A673 (cell line): ENCODE measurements at regions of chrX and their contacts with region 1.

Region 1: DNA sequence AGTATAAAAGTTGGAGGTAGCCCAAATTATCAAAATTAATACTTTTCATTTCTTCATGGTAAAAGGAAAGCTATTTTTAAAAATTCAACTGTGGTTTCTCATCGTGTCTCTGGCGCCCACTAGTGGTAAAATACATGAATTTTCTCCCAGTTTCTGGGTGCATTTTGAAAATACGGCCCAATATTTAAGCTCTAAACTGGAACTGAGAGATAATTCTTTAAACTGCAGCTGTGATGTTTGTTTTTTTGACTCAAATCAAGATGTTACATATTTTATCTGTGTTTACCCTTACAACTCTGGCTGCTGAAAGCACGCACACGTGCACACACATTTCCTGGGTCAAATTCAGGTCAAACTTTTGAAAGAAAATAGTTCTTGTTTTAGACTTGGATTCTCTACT is 123.9 kb upstream of the ACSL4 start:
- DNase-seq: peak; percentile 48
- H3K4me3 ChIP-seq: no peak overlapping the region
- H3K27ac ChIP-seq: no peak overlapping the region
- H3K4me1 ChIP-seq: no peaks in the 10 kb centered on the region
- H3K27me3 ChIP-seq: no peaks in the 10 kb centered on the region
- CTCF ChIP-seq: peak; percentile 89

Region 2: DNA sequence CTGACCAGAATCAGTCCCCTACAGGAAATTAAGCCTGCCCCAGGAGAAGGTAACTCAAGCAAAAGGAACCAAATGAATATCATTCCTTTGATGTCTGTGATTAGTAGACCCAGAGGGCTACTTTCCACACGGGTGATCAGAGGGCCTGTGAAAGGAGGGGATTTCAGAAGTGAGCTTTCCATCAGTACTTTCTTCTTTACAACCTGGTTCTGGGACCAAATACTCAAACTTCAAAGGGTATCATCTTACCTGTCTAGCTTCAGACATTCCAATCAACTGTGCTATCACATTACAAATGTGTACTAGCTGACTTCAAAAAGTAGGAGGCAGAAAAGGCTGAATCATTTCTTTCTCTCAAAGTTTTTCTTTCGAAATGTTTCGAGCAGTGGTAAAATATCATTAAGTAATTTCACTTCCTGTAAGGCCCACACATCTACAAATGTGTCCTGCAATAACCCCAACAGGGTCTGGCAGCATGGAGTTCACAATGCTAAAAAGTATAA is 147.8 kb before region 1 on chrX:
- CTCF ChIA-PET with region 1: interaction called, 20 read pairs
- POLR2A ChIA-PET with region 1: no interaction called
- intact Hi-C with region 1: loop called (anchors 1 kb)
- DNase-seq: peak; percentile 45
- H3K4me3 ChIP-seq: peak overlapping the region; percentile 0
- H3K27ac ChIP-seq: peak overlapping the region; percentile 58
- H3K4me1 ChIP-seq: peaks cover 10% of the 10 kb centered on the region
- H3K27me3 ChIP-seq: no peaks in the 10 kb centered on the region
- CTCF ChIP-seq: no peak

Region 3: GRCh38 chrX:109714340-109714958 is 142.5 kb before region 1 on chrX:
- CTCF ChIA-PET with region 1: interaction called, 20 read pairs
- POLR2A ChIA-PET with region 1: no interaction called
- intact Hi-C with region 1: loop called (anchors 1 kb)
- DNase-seq: no peak
- H3K4me3 ChIP-seq: no peak overlapping the region
- H3K27ac ChIP-seq: no peak overlapping the region
- H3K4me1 ChIP-seq: peaks cover 8% of the 10 kb centered on the region
- H3K27me3 ChIP-seq: no peaks in the 10 kb centered on the region
- CTCF ChIP-seq: no peak

Region 4: GRCh38 chrX:109732780-109733657 is 124.0 kb before region 1 on chrX and contains the start of gene ACSL4:
- CTCF ChIA-PET with region 1: interaction called, 5 read pairs
- POLR2A ChIA-PET with region 1: no interaction called
- intact Hi-C with region 1: loop called (anchors 5 kb)
- DNase-seq: peak; percentile 90
- H3K4me3 ChIP-seq: peak within 1 kb of the TSS; percentile 73
- H3K27ac ChIP-seq: peak within 1 kb of the TSS; percentile 81
- H3K4me1 ChIP-seq: peaks cover 10% of the 10 kb centered on the region
- H3K27me3 ChIP-seq: no peaks in the 10 kb centered on the region
- CTCF ChIP-seq: no peak
- total RNA-seq, gene ACSL4: 48.3 and 59.7 TPM in 2 replicates

Region 5: DNA sequence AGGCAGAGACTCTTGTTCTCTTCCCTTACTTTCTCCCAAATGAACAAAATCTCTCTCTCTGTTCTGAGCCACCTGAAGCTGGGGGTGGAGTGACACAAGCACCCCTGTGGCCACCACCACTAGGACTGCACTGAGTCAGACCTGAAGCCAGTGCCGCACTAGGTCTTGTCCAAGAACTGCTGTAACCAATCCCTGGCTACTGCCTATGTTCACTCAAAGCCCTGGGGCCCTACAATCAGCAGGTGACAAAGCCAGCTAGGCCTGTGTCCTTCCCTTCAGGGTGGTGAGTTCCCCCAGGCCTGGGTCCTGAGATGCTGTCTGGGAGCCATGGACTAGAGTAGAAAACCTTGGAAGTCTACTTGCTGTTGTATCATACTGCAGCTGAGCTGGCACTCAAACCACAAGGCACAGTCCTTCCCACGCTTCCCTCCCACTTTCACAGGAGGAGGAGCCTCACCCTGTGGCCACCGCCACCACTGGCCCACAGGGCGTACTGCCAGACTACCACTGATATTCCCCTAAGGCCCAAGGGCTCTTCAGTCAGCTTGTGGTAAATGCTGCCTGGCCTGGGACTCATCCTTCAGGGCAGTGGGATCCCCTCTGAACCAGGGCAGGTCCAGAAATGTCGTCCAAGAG is 620.7 kb after region 1 on chrX:
- CTCF ChIA-PET with region 1: no interaction called
- POLR2A ChIA-PET with region 1: no interaction called
- intact Hi-C with region 1: no loop called
- DNase-seq: no peak
- H3K4me3 ChIP-seq: no peak overlapping the region
- H3K27ac ChIP-seq: no peak overlapping the region
- H3K4me1 ChIP-seq: no peaks in the 10 kb centered on the region
- H3K27me3 ChIP-seq: no peaks in the 10 kb centered on the region
- CTCF ChIP-seq: no peak

Region 6: GRCh38 chrX:111123125-111123524 is 1266.2 kb after region 1 on chrX:
- CTCF ChIA-PET with region 1: no interaction called
- POLR2A ChIA-PET with region 1: no interaction called
- intact Hi-C with region 1: no loop called
- DNase-seq: no peak
- H3K4me3 ChIP-seq: no peak overlapping the region
- H3K27ac ChIP-seq: no peak overlapping the region
- H3K4me1 ChIP-seq: no peaks in the 10 kb centered on the region
- H3K27me3 ChIP-seq: peaks cover 25% of the 10 kb centered on the region
- CTCF ChIP-seq: no peak